ENCODE measurements at regions of chr5 and their contacts with region 1.

Region 1: DNA sequence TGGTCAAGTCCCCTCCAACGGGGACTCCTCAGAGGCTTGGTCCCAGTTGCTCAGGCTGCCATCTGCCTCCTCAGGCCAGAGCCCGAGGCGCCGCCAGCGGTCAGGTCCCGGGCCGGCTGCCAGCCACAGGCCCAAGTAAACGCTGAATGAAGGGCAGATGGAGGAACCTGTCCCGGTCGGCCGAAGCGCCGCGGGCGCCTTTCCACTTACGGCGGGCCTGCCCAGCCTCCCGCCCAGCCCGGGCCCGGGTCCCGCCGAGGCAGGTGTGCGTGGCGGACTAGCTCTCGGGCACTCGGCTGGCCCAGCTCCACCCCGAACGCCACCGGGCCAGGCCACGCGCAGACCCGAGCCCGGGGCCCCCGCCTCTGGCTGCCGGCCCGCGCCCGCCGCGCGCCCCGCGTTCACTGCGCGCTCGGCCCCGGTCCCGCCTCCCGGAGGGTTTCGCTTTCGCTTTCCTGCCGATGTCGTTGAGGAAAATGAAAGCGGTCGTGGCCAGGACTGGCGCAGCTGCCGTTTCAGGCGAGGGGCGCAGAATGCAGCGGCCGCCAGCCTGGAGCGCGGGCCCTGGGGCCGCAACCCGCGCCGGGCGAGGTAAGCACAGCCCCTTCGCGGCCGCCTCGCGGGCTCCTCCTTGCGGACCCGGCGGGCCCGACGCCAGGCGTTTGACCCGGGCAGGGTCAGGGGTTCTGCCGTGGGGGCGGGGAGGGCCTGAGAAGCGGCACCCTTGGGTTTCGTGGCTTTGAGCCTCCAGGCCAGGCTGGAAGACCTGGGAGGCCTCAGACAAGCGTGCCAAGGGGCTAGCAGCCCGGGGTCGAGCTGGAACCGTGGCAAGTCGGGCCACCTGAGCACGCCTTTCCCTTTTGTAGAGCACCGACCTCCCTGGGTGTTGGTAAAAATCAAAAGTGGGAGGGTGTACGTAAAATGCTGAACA is 41.2 kb downstream of the SLC22A5 start:
- DNase-seq: peak; percentile 94
- H3K4me3 ChIP-seq: peak overlapping the region; percentile 73 to 94 (median 78)
- H3K27ac ChIP-seq: peak overlapping the region; percentile 96 to 99 (median 98)
- H3K4me1 ChIP-seq: peaks cover 63 to 72% (median 69%) of the 10 kb centered on the region in 4 donors
- H3K27me3 ChIP-seq: no peaks in the 10 kb centered on the region
- CTCF ChIP-seq: peak; percentile 38 to 67 (median 47)
- EP300 ChIP-seq: no peak
- POLR2A ChIP-seq: no peak

Region 2: GRCh38 chr5:132327252-132327955 is 83.3 kb before region 1 on chr5:
- intact Hi-C with region 1: no loop called
- DNase-seq: no peak
- H3K4me3 ChIP-seq: no peak overlapping the region
- H3K27ac ChIP-seq: no peak overlapping the region
- H3K4me1 ChIP-seq: no peaks in the 10 kb centered on the region
- H3K27me3 ChIP-seq: no peaks in the 10 kb centered on the region
- CTCF ChIP-seq: no peak
- EP300 ChIP-seq: no peak
- POLR2A ChIP-seq: no peak

Region 3: DNA sequence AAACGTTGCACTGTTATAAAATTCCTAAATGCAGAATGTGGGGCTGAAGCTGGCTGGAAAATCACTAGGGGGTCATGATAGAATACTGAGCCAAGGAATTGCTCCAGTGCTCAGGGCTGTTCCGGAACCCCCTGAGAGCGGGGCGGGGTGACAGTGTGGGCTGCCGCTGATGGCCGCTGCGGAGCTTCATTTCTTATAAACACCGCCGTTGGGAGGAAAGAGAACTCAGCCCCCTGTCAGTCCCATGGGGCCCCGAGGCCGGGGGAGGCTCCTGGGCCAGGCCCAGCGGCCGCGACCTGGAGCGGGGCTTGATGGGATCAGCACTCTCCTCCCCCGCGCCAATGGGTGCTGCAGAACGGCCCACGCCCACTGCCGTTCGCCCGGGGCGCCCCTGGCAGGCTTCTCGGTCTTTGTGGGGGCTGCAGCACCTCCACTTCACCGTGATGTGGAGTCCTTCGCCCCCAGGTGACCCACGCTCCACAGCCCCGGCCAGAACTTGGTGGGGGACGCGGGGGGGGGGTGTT is 85.0 kb after region 1 on chr5:
- intact Hi-C with region 1: loop called (anchors 5 kb)
- DNase-seq: peak; percentile 97
- H3K4me3 ChIP-seq: peak overlapping the region; percentile 73 to 86 (median 76)
- H3K27ac ChIP-seq: peak overlapping the region; percentile 94 to 98 (median 96)
- H3K4me1 ChIP-seq: peaks cover 49 to 76% (median 60%) of the 10 kb centered on the region in 4 donors
- H3K27me3 ChIP-seq: no peaks in the 10 kb centered on the region
- CTCF ChIP-seq: no peak
- EP300 ChIP-seq: peak; percentile 46
- POLR2A ChIP-seq: no peak

Measured in esophagus muscularis mucosa (tissue), 4 donors.